ENCODE measurements at regions of chr4 and their contacts with region 1.

Region 1: GRCh38 chr4:37555322-37555721 is 130.9 kb downstream of the RELL1 start:
- DNase-seq: no peak
- CTCF ChIP-seq: no peak

Region 2: DNA sequence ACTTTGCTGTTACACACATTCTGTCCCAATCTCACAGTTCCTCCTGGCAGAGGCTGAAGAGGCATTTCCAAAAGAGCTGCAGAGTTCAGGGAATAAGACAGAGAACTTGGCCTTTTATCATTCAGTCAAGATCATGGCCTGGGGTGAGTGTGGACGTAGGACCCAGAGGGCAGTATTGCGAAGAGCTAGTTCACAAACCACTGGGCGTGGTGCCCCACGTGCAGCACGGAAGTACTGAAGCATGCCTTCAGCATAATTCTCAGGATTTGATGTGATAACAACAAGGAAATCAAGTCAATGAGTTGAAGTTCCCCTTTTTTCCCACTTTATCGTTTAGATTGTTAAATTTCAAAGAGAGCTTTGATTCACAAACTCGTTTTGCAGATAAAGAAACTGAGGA is 13.2 kb after region 1 on chr4:
- CTCF ChIA-PET with region 1: interaction called, 25 read pairs
- POLR2A ChIA-PET with region 1: no interaction called
- DNase-seq: no peak
- CTCF ChIP-seq: no peak